ENCODE measurements at regions of chr1 and their contacts with region 1.

Region 1: GRCh38 chr1:172727956-172728603 is 69.2 kb downstream of the FASLG start:
- DNase-seq: peak; percentile 57
- H3K4me3 Mint-ChIP-seq: no peak overlapping the region
- H3K27ac Mint-ChIP-seq: no peak overlapping the region
- H3K4me1 Mint-ChIP-seq: peaks cover 24% of the 10 kb centered on the region
- H3K27me3 Mint-ChIP-seq: peaks cover 27% of the 10 kb centered on the region

Region 2: GRCh38 chr1:172742599-172743500 is 14.8 kb after region 1 on chr1:
- CTCF ChIA-PET with region 1: interaction called, 15 read pairs
- POLR2A ChIA-PET with region 1: no interaction called
- DNase-seq: peak; percentile 17
- H3K4me3 Mint-ChIP-seq: no peak overlapping the region
- H3K27ac Mint-ChIP-seq: no peak overlapping the region
- H3K4me1 Mint-ChIP-seq: peaks cover 34% of the 10 kb centered on the region
- H3K27me3 Mint-ChIP-seq: peaks cover 42% of the 10 kb centered on the region

Region 3: DNA sequence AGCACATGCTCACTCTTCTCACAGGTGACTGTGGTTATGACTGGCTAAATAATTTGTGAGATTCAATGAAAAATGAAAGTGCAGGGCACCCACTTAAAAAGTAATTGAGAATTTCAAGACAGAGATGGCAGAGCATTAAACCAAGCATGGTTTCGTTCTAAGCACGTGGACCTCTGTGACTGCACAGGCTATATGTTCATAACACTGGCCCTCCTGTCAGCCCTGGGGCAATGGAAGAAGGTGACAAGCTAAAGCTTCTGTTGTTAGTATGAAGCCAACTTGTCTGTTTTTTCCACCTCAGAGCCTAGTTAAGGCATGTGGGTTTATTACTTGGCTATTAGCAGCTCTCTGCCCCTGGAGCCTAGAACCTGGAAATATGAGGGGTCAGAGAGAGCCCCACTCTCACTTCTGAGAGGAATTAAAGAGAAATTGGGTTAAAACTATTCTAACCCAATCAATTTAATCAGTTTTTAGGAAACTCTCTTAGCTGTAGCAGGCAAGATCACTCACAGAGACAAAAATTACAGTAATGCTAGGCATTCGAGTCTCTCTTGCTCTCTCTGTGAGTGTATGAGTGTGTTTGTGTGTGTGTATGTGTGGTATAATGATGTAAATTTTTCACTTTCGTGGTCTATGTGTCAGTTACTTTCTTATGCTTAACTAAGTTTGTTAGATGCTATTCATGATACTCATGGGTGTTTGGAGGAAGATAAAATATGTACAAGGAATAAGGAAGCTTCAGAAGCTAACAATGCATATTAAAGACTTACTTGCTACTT is 62.0 kb after region 1 on chr1:
- CTCF ChIA-PET with region 1: no interaction called
- POLR2A ChIA-PET with region 1: no interaction called
- DNase-seq: no peak
- H3K4me3 Mint-ChIP-seq: no peak overlapping the region
- H3K27ac Mint-ChIP-seq: no peak overlapping the region
- H3K4me1 Mint-ChIP-seq: no peaks in the 10 kb centered on the region
- H3K27me3 Mint-ChIP-seq: peaks cover 8% of the 10 kb centered on the region